A673 (cell line): ENCODE measurements at regions of chr15 and their contacts with region 1.

Region 1: GRCh38 chr15:65028921-65029735 is at the start of gene MTFMT:
- DNase-seq: peak; percentile 93
- H3K4me3 ChIP-seq: peak within 1 kb of the TSS; percentile 75
- H3K27ac ChIP-seq: peak within 1 kb of the TSS; percentile 86
- H3K4me1 ChIP-seq: peaks cover 10% of the 10 kb centered on the region
- H3K27me3 ChIP-seq: no peaks in the 10 kb centered on the region
- CTCF ChIP-seq: no peak
- total RNA-seq, gene MTFMT: 26.2 and 32.1 TPM in 2 replicates

Region 2: DNA sequence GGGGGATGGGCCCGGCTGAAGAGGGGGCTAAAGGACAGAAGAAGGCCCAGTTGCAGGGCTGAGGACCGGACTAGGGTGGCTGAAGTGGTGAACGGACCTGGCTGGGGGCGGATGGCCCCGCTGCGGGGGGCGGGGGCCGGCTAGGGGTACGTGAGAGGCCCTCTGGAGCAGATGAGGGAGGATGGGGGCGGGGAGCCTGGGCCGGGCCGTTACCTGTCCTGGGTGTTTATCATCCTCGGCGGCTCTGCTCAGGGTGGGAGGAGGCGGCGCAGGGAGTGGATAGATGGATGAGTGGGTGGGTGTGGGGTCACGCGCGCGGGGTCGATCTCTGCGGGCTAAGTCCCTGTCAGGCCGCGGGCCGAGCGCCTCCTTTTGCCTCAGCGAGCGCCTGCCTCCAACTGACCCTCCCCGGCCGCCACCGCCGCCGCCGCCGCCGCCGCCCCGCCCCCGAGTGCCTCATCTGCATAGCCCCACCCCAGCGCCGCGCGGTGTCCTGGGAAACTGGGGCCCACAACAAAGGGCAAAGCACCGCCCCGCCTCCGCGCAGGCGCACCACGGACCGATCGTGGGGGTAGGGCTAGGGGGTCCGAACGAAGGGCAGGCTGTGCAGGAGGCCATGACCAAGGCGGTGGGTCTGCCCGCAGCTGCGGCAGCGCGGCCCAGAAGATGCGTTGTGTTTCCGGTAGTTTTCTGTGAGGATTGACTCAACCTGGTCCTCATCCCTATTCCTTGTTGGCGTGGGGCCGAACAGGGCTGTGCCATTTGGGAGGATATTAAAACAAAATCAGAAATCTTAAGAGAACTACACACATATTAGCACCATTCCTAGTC is 326.1 kb before region 1 on chr15:
- CTCF ChIA-PET with region 1: no interaction called
- POLR2A ChIA-PET with region 1: no interaction called
- intact Hi-C with region 1: no loop called
- DNase-seq: peak; percentile 95
- H3K4me3 ChIP-seq: peak overlapping the region; percentile 71
- H3K27ac ChIP-seq: peak overlapping the region; percentile 76
- H3K4me1 ChIP-seq: peaks cover 37% of the 10 kb centered on the region
- H3K27me3 ChIP-seq: no peaks in the 10 kb centered on the region
- CTCF ChIP-seq: 0 out of 2 replicates have a peak, but pooled peaks have one; percentile 8

Region 3: GRCh38 chr15:65077981-65078352 is 48.8 kb after region 1 on chr15:
- CTCF ChIA-PET with region 1: interaction called, 9 read pairs
- POLR2A ChIA-PET with region 1: no interaction called
- intact Hi-C with region 1: loop called (anchors 1 kb)
- DNase-seq: peak; percentile 70
- H3K4me3 ChIP-seq: no peak overlapping the region
- H3K27ac ChIP-seq: no peak overlapping the region
- H3K4me1 ChIP-seq: no peaks in the 10 kb centered on the region
- H3K27me3 ChIP-seq: no peaks in the 10 kb centered on the region
- CTCF ChIP-seq: peak; percentile 79

Region 4: DNA sequence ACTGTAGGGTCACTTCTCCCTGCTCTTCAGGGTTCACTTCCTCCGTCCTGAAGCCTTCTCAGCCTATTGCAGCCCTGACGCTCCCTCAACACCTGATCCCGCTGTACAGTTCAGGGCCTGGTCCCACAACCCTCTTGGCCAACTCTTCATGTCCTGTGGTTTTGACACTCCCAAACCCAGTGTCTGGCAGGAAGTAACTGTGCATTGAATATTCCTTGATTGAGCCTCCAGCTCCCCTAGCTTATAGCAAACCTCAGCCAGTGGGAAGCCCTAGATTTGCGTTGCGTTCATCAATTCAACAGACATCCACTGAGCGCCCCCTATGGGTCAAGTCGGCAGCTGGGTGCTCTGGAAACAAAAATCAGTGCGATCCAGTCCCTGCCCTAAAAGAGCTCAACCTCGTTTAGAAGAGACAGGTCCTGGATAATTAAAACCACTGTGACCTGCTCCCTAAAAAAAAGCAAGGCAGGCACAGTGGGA is 72.3 kb after region 1 on chr15:
- CTCF ChIA-PET with region 1: interaction called, 6 read pairs
- POLR2A ChIA-PET with region 1: no interaction called
- intact Hi-C with region 1: loop called (anchors 1 kb)
- DNase-seq: peak; percentile 80
- H3K4me3 ChIP-seq: no peak overlapping the region
- H3K27ac ChIP-seq: no peak overlapping the region
- H3K4me1 ChIP-seq: no peaks in the 10 kb centered on the region
- H3K27me3 ChIP-seq: no peaks in the 10 kb centered on the region
- CTCF ChIP-seq: peak; percentile 96